CD8-positive, alpha-beta T cell (primary cell): ENCODE measurements at regions of chr3 and their contacts with region 1.

Region 1: DNA sequence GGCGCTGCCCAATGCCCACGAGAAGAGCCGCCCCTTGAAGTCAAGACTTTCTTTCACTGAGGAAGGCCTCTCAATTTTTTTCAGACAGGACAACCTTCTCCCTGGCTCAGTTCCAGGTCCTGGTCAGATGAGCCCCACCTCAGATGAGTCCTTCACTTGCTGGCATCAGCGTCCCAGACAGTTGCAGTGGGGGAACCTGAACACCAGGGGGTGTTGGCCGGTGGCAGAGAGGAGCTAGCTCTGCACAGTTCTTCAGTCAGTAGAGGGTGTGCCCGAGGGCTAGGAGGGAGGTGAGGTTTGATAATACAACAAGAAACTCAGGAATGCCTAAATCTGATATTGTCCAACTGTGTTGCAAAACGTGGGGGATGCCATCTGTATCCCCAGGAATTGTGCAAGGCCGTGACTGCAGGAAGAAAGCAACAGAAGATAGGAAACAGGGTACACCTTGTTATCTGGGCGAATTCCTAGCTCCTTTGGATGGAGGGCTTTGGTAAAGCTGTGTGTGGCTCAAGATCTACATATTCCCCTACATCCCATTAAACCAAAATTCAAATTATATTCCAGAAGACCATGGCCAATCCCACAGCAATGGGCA is 34.3 kb downstream of the CCR3 start:
- DNase-seq: peak; percentile 59 to 86 (median 77)
- ATAC-seq: peak; percentile 80
- H3K4me3 ChIP-seq: no peak overlapping the region
- H3K4me3 Mint-ChIP-seq: no peak overlapping the region
- H3K27ac ChIP-seq: no peak overlapping the region
- H3K27ac Mint-ChIP-seq: no peak overlapping the region
- H3K4me1 ChIP-seq: peaks cover 15% of the 10 kb centered on the region
- H3K4me1 Mint-ChIP-seq: peaks cover 37% of the 10 kb centered on the region
- H3K27me3 ChIP-seq: no peaks in the 10 kb centered on the region
- H3K27me3 Mint-ChIP-seq: peaks cover 2% of the 10 kb centered on the region
- CTCF ChIP-seq: peak; percentile 79

Region 2: DNA sequence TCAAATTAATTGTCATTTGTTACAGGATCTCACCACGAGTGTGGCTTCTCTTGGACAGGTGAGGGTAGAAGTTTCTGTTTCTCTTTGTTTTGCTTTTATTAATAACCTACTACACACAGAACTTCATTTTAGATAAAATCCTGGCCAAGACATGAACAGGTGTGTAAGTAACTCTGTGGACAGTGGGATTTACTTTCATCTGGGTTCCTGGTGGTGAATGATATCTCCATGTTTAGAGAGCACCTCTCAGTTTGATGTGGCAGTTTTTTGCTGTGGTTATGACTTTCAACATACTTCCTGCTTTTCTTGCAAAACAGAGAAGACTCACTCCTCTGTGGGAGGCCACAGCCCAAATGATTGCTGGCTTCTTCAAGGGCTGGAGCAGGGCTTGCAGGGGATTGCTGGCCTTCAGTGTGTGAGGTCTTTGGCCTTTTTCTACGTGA is 178.3 kb before region 1 on chr3:
- CTCF ChIA-PET with region 1: no interaction called
- POLR2A ChIA-PET with region 1: no interaction called
- intact Hi-C with region 1: loop called in 1 of 2 experiments (anchors 5 kb)
- DNase-seq: peak in 8 of 9 experiments; percentile 19 to 70 (median 43)
- ATAC-seq: peak; percentile 75
- H3K4me3 ChIP-seq: no peak overlapping the region
- H3K4me3 Mint-ChIP-seq: peak overlapping the region; percentile 63
- H3K27ac ChIP-seq: peak overlapping the region; percentile 3 to 89
- H3K27ac Mint-ChIP-seq: peak overlapping the region; percentile 72
- H3K4me1 ChIP-seq: peaks cover 27% of the 10 kb centered on the region
- H3K4me1 Mint-ChIP-seq: peaks cover 48% of the 10 kb centered on the region
- H3K27me3 ChIP-seq: no peaks in the 10 kb centered on the region
- H3K27me3 Mint-ChIP-seq: no peaks in the 10 kb centered on the region
- CTCF ChIP-seq: no peak

Region 3: DNA sequence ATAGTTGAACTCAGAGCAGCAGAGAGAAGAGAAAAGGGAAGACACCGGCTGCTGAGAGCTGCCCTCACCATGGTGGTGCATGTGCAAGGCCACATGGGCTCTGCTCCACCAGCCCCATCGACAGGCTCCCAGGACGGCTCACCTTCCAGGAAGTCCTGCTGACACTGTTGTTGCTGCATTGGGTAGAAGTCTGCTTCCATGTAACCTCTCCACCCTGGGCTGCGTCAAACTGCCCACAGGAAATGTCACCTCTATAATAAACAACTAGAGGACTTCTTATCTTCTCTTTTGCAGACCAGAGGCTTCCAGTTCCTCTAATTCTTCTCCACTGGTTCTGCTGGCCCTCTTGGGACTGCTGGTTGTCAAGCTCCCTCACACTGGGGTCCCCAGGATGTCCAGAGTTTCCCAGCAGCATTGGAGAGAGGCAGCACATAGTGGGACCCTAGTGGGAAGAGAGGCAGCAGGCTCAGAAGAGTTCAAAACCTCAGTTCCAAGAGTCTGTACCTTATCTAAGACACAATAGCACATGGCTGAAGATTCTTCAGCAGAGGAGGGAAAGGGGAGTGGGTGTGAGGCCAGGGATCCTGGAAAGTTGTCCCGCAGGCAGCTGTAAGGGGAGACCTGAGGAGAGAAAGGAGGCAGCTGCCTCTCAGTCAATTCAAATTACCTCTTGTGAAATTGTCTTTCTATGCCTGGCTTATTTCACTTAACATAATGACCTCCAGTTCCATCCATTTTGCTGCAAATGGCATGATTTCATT is 40.1 kb before region 1 on chr3:
- CTCF ChIA-PET with region 1: no interaction called
- POLR2A ChIA-PET with region 1: no interaction called
- intact Hi-C with region 1: no loop called
- DNase-seq: peak in 3 of 9 experiments; percentile 3 to 49 (median 20)
- ATAC-seq: no peak
- H3K4me3 ChIP-seq: no peak overlapping the region
- H3K4me3 Mint-ChIP-seq: no peak overlapping the region
- H3K27ac ChIP-seq: no peak overlapping the region
- H3K27ac Mint-ChIP-seq: no peak overlapping the region
- H3K4me1 ChIP-seq: no peaks in the 10 kb centered on the region
- H3K4me1 Mint-ChIP-seq: peaks cover 3% of the 10 kb centered on the region
- H3K27me3 ChIP-seq: no peaks in the 10 kb centered on the region
- H3K27me3 Mint-ChIP-seq: no peaks in the 10 kb centered on the region
- CTCF ChIP-seq: no peak

Region 4: GRCh38 chr3:46266598-46266997 is 10.0 kb before region 1 on chr3:
- CTCF ChIA-PET with region 1: interaction called, 22 read pairs
- POLR2A ChIA-PET with region 1: interaction called, 4 read pairs
- intact Hi-C with region 1: no loop called
- DNase-seq: no peak
- ATAC-seq: no peak
- H3K4me3 ChIP-seq: no peak overlapping the region
- H3K4me3 Mint-ChIP-seq: no peak overlapping the region
- H3K27ac ChIP-seq: no peak overlapping the region
- H3K27ac Mint-ChIP-seq: no peak overlapping the region
- H3K4me1 ChIP-seq: peaks cover 4% of the 10 kb centered on the region
- H3K4me1 Mint-ChIP-seq: peaks cover 18% of the 10 kb centered on the region
- H3K27me3 ChIP-seq: no peaks in the 10 kb centered on the region
- H3K27me3 Mint-ChIP-seq: peaks cover 3% of the 10 kb centered on the region
- CTCF ChIP-seq: no peak

Region 5: DNA sequence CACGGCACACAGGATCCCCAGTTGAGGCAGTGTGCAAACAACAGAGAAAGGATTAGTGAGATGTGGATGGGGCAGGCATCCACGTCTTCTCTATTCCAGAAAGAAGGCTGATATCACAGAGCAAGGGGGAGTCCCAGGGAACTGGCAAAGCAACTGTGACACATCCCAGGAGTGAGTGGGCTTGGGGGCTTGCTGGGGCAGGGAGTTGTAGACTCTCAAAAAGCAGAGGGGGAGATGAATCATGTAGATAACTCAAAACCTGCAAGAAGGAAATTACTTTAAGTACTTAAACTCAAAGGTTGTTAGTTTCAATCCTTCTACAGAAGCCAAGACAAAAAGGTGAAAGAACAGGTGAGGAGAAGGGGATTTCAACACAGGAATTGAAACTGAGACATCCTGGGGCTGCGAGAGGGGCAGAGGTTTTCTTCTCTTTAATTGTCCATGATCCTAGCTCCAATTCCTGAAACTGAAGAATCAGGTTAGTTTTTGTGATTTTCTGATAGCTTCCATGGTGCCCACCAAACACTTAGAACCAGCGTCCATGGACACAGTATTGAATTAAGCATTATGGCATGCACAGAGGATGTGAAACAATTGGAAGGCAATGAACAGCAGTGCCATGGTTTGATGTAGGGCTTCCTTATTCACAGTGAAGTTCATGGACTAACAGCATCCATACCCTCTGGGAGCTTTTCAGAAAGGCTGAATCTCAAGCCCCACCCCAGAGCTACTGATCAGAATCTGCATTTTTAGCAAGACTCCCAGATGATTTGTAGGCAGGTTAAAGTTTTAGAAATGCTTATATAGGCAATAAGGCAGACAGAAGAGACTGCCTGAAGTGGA is 17.6 kb after region 1 on chr3:
- CTCF ChIA-PET with region 1: interaction called, 11 read pairs
- POLR2A ChIA-PET with region 1: no interaction called
- intact Hi-C with region 1: no loop called
- DNase-seq: no peak
- ATAC-seq: no peak
- H3K4me3 ChIP-seq: no peak overlapping the region
- H3K4me3 Mint-ChIP-seq: no peak overlapping the region
- H3K27ac ChIP-seq: peak overlapping the region in 1 of 2 experiments; percentile 51
- H3K27ac Mint-ChIP-seq: peak overlapping the region; percentile 80
- H3K4me1 ChIP-seq: peaks cover 16% of the 10 kb centered on the region
- H3K4me1 Mint-ChIP-seq: peaks cover 56% of the 10 kb centered on the region
- H3K27me3 ChIP-seq: no peaks in the 10 kb centered on the region
- H3K27me3 Mint-ChIP-seq: no peaks in the 10 kb centered on the region
- CTCF ChIP-seq: no peak

Region 6: DNA sequence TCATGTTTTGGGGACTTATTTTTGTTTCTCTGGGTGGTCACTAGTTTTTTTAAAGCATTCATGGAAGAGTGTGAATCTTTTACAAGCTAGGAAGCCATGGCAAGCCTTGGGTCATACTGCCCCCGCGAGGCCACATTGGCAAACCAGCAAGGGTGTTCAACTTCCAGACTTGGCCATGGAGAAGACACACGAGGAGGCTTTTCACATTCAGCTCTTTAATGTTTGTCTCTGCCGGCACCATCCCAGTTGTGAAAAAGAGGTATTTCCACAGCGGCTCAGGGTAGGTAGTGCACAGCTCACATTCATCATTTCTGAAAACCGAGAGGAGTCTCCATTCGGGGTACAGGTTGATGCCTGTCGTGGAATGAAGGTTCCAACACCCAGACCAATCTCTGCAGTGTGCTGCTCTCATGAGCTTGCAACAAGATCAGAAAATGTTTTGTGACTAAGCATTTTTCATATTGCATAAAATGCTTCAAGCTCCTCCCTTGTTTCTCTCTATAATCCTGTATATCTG is 101.9 kb after region 1 on chr3:
- CTCF ChIA-PET with region 1: interaction called, 16 read pairs
- POLR2A ChIA-PET with region 1: no interaction called
- intact Hi-C with region 1: loop called in 1 of 2 experiments (anchors 1 kb)
- DNase-seq: peak; percentile 26 to 76 (median 64)
- ATAC-seq: peak; percentile 53
- H3K4me3 ChIP-seq: no peak overlapping the region
- H3K4me3 Mint-ChIP-seq: no peak overlapping the region
- H3K27ac ChIP-seq: no peak overlapping the region
- H3K27ac Mint-ChIP-seq: peak overlapping the region; percentile 28
- H3K4me1 ChIP-seq: peaks cover 33% of the 10 kb centered on the region
- H3K4me1 Mint-ChIP-seq: peaks cover 60% of the 10 kb centered on the region
- H3K27me3 ChIP-seq: no peaks in the 10 kb centered on the region
- H3K27me3 Mint-ChIP-seq: no peaks in the 10 kb centered on the region
- CTCF ChIP-seq: peak; percentile 55

Region 7: DNA sequence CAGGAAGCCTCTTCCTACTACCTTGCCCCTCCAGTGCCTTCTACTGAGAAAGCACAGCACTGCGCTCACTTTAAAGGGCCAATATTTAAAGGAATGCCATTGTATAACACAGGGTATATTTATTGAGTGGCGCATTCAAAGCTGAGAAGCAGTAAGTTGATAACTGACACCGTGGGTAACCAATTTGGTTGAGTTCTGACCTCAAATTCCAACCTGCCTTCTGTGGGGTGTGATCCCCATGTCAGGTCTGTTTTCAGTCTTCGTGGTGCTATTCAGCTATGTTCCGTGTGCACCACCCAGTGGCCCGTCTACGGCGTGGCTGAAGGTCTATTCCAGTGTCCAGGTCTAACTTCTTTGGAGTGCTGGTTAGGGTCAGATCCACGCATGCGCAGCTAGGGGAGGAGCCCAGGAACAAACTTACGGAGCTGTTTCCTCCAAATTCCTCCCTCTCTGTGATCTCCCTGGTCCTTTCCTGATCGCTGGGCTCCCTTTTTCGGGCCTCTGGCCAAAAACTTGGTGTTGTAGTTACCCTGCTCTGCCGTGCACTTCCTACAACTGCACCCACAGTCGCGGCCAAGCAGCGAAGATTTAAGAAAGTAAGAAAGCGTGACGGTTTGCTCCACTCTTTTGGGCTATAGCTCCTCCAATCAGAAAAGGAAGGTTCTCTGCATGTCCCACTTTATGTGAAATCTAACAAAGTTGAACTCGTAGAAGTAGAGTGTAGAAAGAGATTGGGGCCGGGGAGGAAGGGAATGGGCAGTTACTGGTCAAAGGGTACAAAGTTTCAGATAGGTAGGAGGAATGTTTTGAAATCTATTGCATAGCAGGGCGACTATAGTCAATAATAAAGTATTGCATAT is 281.8 kb after region 1 on chr3:
- CTCF ChIA-PET with region 1: interaction called, 4 read pairs
- POLR2A ChIA-PET with region 1: no interaction called
- intact Hi-C with region 1: loop called (anchors 1 to 5 kb)
- DNase-seq: peak; percentile 37 to 89 (median 76)
- ATAC-seq: peak; percentile 97
- H3K4me3 ChIP-seq: peak overlapping the region; percentile 13 to 41
- H3K4me3 Mint-ChIP-seq: peak overlapping the region; percentile 80
- H3K27ac ChIP-seq: no peak overlapping the region
- H3K27ac Mint-ChIP-seq: peak overlapping the region; percentile 80
- H3K4me1 ChIP-seq: peaks cover 5% of the 10 kb centered on the region
- H3K4me1 Mint-ChIP-seq: peaks cover 17% of the 10 kb centered on the region
- H3K27me3 ChIP-seq: no peaks in the 10 kb centered on the region
- H3K27me3 Mint-ChIP-seq: no peaks in the 10 kb centered on the region
- CTCF ChIP-seq: peak; percentile 97